GM10248 (cell line): ENCODE measurements at regions of chr18 and their contacts with region 1.

Region 1: GRCh38 chr18:59907172-59907571 is 7.4 kb downstream of the PMAIP1 start:
- DNase-seq: no peak
- CTCF ChIP-seq: no peak

Region 2: GRCh38 chr18:59799383-59800015 is 107.7 kb before region 1 on chr18:
- CTCF ChIA-PET with region 1: no interaction called
- POLR2A ChIA-PET with region 1: interaction called, 10 read pairs
- DNase-seq: no peak
- CTCF ChIP-seq: no peak

Region 3: DNA sequence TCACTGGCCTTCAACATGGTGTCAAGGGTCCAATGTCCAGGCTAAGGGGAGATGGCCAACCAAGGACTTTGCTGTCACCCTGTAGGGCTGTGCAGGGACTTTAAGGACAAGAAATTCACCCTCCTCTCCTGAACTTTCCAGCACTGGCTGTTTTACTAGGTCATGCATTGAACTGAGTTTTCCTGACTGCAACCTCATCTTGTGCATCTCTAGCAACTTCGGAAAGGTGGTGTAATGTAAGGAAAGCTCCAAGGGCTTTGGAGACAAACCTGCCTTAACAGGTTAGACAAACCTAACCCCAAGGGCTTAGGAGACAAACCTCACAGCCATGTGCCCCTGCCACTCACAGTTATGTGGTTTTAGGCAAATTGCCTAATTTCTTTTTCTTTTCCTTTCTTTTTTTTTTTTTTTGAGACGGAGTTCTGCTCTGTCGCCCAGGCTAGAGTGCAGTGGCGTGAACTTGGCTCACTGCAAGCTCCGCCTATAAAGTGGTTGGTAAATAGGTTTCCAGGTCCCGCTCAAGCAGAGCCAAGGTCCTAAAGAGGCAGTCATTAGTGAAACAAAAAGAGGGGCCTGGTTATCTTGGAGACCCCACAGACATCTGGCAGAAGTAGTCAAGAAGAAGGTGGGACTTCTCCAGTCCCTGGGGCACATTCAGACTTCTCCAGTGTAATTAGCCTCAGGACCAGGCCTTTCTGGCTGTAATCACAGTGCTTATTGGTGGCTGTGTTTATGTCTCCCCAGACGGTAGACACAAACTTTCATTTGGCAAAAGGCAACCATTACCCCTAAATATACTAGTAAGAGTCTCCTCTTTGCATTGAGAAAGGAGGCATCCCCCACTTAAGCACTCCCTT is 45.0 kb before region 1 on chr18:
- CTCF ChIA-PET with region 1: no interaction called
- POLR2A ChIA-PET with region 1: no interaction called
- DNase-seq: no peak
- CTCF ChIP-seq: no peak

Region 4: GRCh38 chr18:59918320-59918755 is 11.2 kb after region 1 on chr18:
- CTCF ChIA-PET with region 1: interaction called, 21 read pairs
- POLR2A ChIA-PET with region 1: interaction called, 13 read pairs
- DNase-seq: peak; percentile 37
- CTCF ChIP-seq: no peak

Region 5: DNA sequence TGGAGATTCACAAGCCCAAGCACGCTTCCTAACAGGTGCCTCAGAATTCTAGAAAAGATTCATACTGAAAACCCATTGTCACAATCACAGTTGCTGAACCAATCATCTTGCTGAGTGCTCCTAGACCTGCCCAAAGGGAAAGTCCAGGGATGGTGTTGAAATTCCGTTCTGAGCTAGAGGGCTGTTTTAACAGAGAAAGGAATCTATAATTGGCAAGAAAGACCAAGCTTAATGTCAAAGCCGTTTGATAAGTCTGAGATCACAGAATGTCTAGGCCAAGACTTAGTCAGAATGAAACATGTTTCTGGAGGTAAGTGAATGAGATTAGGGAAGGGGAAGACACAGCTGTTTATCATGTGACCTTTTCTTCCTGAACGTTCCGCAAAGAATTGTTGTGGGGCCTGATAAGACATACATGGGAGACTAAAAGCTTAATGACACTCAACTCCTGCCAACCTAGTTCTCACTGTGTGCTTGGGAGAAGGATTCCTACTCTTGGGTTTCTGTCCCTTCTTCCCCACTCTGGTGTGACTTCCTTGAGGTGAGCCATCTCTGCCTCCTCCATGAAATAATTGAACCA is 20.2 kb after region 1 on chr18:
- CTCF ChIA-PET with region 1: interaction called, 7 read pairs
- POLR2A ChIA-PET with region 1: interaction called, 47 read pairs
- DNase-seq: peak; percentile 69
- CTCF ChIP-seq: no peak

Region 6: GRCh38 chr18:59954746-59955145 is 47.6 kb after region 1 on chr18:
- CTCF ChIA-PET with region 1: no interaction called
- POLR2A ChIA-PET with region 1: interaction called, 13 read pairs
- DNase-seq: no peak
- CTCF ChIP-seq: no peak

Region 7: DNA sequence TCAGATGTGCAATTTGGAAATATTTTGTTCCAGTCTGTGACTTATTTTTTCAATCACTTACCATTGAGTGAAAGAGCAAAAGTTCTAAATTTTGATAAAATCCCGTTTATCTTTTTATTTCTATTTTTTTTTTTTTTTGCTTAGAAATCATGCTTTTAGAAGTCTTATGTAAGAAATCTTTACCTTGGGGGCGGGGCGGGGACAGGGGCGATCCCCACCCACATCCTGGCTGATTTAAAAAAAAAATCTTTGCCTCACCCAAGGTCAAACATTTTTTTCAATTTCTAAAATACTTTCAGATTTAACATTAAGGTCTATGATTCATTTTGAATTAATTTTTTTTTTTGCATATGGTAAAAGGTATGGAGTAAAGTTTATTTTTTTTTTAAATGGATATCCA is 128.9 kb after region 1 on chr18:
- CTCF ChIA-PET with region 1: no interaction called
- POLR2A ChIA-PET with region 1: no interaction called
- DNase-seq: no peak
- CTCF ChIP-seq: no peak